ENCODE measurements at regions of chr3 and their contacts with region 1.

Region 1: GRCh38 chr3:179147873-179148615 is at the start of gene PIK3CA:
- DNase-seq: peak; percentile 94 to 97 (median 96)
- ATAC-seq: peak; percentile 97 to 99 (median 98)
- H3K4me3 ChIP-seq: peak within 1 kb of the TSS; percentile 83 to 97 (median 88)
- H3K27ac ChIP-seq: peak within 1 kb of the TSS; percentile 94 to 99 (median 98)
- H3K4me1 ChIP-seq: peaks cover 0 to 41% (median 27%) of the 10 kb centered on the region in 12 donors
- H3K27me3 ChIP-seq: no peaks in the 10 kb centered on the region
- CTCF ChIP-seq: no peak
- POLR2A ChIP-seq: peak in 1 of 2 donors; percentile 77
- total RNA-seq, gene PIK3CA: 13.9 to 28.0 (median 21.4) TPM

Region 2: DNA sequence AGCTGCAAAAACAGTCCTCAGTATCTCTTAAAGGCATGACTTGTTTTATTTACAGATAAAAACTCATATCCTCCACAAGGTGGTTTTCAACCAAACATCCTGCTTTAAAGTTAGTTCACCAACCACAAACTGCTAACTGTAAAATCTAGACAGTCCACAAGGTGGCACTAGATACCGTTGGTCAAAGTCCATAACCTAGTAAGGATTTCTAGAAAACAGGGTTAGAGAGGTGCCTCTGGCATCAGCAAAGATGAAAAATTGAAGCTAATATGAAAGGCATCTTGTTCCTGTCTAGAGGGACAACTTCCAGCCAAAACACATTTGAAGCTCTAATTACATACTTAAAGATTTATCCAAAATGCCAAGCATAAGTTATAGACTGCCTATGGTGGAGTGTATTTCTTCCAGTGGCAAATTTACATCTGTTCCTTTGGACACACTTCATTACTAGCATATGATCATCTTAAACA is 132.5 kb before region 1 on chr3:
- intact Hi-C with region 1: loop called in 4 of 10 experiments (anchors 5 to 10 kb)
- DNase-seq: peak in 2 of 5 donors; percentile 32 to 34
- ATAC-seq: peak in 3 of 4 donors; percentile 69 to 77 (median 70)
- H3K4me3 ChIP-seq: no peak overlapping the region
- H3K27ac ChIP-seq: no peak overlapping the region
- H3K4me1 ChIP-seq: peaks cover 0 to 10% (median 9%) of the 10 kb centered on the region in 12 donors
- H3K27me3 ChIP-seq: no peaks in the 10 kb centered on the region
- CTCF ChIP-seq: peak; percentile 75 to 94 (median 86)
- POLR2A ChIP-seq: no peak

Region 3: GRCh38 chr3:179071550-179072397 is 76.3 kb before region 1 on chr3 and contains the start of gene ZMAT3:
- intact Hi-C with region 1: loop called in 2 of 10 experiments (anchors 2 to 10 kb)
- DNase-seq: peak; percentile 92 to 95 (median 93)
- ATAC-seq: peak; percentile 78 to 99 (median 98)
- H3K4me3 ChIP-seq: peak within 1 kb of the TSS; percentile 49 to 96 (median 84)
- H3K27ac ChIP-seq: peak within 1 kb of the TSS; percentile 59 to 95 (median 90)
- H3K4me1 ChIP-seq: peaks cover 0 to 42% (median 21%) of the 10 kb centered on the region in 12 donors
- H3K27me3 ChIP-seq: no peaks in the 10 kb centered on the region
- CTCF ChIP-seq: peak in 2 of 12 donors; percentile 8 to 14
- POLR2A ChIP-seq: peak in 1 of 2 donors; percentile 79
- total RNA-seq, gene ZMAT3: 10.5 to 23.2 (median 15.6) TPM

Region 4: GRCh38 chr3:179189759-179190158 is 41.7 kb after region 1 on chr3:
- intact Hi-C with region 1: loop called in 2 of 10 experiments (anchors 5 kb)
- DNase-seq: peak in 1 of 5 donors; percentile 25
- ATAC-seq: peak in 3 of 4 donors; percentile 52 to 79 (median 55)
- H3K4me3 ChIP-seq: no peak overlapping the region
- H3K27ac ChIP-seq: peak overlapping the region in 3 of 12 donors; percentile 1 to 21 (median 3)
- H3K4me1 ChIP-seq: peaks cover 6 to 59% (median 36%) of the 10 kb centered on the region in 12 donors
- H3K27me3 ChIP-seq: no peaks in the 10 kb centered on the region
- CTCF ChIP-seq: no peak
- POLR2A ChIP-seq: no peak

Region 5: DNA sequence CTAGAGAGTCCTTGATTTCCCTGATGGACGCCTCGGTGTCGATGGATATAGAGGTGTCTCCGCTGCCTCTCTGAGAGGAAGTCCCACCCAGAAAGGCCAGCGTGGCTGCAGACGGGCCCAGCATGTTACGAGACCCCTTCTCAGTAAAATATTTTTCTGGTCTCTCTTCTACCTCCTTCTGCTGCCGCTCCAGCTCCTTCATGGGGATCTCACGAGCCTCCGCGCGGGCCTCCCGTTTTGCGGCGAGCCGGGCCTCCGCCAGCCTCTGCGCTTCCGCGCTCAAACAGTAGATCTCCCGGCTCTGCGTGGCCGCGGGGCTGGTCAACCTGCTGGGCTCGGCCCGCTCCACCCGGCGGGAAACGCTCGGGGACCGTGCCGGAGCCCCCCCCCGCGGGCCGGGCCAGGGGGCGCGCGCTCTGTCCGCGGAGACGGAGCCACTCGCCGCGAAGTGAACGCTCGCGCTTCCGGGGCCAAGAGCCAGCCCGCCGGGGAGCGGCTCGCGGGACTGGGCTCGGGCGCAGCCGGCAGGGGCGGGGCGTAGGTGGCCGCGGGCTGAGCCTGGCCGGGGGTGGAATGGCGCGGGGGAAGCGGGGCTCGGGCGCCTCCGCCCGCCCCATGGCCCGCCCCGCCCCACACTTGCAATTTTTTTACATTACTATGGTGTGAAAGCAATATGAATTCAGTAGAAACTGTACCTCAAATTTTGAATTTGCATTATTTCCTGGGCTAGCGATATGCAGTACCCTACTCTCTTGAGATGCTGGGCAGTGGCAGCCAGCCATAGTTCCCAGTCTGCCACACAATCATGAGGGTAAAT is 113.1 kb after region 1 on chr3:
- intact Hi-C with region 1: loop called in 4 of 10 experiments (anchors 2 to 5 kb)
- DNase-seq: peak; percentile 76 to 92 (median 85)
- ATAC-seq: peak; percentile 86 to 100 (median 98)
- H3K4me3 ChIP-seq: peak overlapping the region; percentile 22 to 85 (median 72)
- H3K27ac ChIP-seq: peak overlapping the region in 11 of 12 donors; percentile 25 to 81 (median 70)
- H3K4me1 ChIP-seq: peaks cover 0 to 7% (median 0%) of the 10 kb centered on the region in 12 donors
- H3K27me3 ChIP-seq: no peaks in the 10 kb centered on the region
- CTCF ChIP-seq: no peak
- POLR2A ChIP-seq: peak in 1 of 2 donors; percentile 63

Measured in heart left ventricle (tissue), 16 donors.